ENCODE measurements at regions of chr2 and their contacts with region 1.

Region 1: GRCh38 chr2:106104332-106105062 is 89.6 kb downstream of the UXS1 start:
- DNase-seq: no peak
- H3K4me3 ChIP-seq: no peak overlapping the region
- H3K27ac ChIP-seq: no peak overlapping the region
- H3K4me1 ChIP-seq: peaks cover 0 to 13% (median 6%) of the 10 kb centered on the region in 3 donors
- H3K27me3 ChIP-seq: no peaks in the 10 kb centered on the region
- CTCF ChIP-seq: peak; percentile 91 to 97 (median 94)
- POLR2A ChIP-seq: no peak

Region 2: GRCh38 chr2:105969555-105969954 is 134.9 kb before region 1 on chr2:
- intact Hi-C with region 1: no loop called
- DNase-seq: no peak
- H3K4me3 ChIP-seq: no peak overlapping the region
- H3K27ac ChIP-seq: no peak overlapping the region
- H3K4me1 ChIP-seq: no peaks in the 10 kb centered on the region
- H3K27me3 ChIP-seq: no peaks in the 10 kb centered on the region
- CTCF ChIP-seq: peak in 2 of 6 experiments; percentile 32 to 54
- POLR2A ChIP-seq: no peak

Region 3: GRCh38 chr2:106193977-106194778 is 89.7 kb after region 1 on chr2 and contains the start of gene UXS1:
- intact Hi-C with region 1: no loop called
- DNase-seq: peak; percentile 78
- H3K4me3 ChIP-seq: peak within 1 kb of the TSS; percentile 69 to 99 (median 93)
- H3K27ac ChIP-seq: peak within 1 kb of the TSS; percentile 85 to 94 (median 91)
- H3K4me1 ChIP-seq: peaks cover 0 to 57% (median 15%) of the 10 kb centered on the region in 3 donors
- H3K27me3 ChIP-seq: peaks cover 0 to 7% (median 0%) of the 10 kb centered on the region in 4 donors
- CTCF ChIP-seq: no peak
- POLR2A ChIP-seq: peak in 2 of 4 donors; percentile 34 to 70
- total RNA-seq, gene UXS1: 23.5 to 40.4 (median 33.1) TPM

Region 4: GRCh38 chr2:106542811-106543259 is 438.3 kb after region 1 on chr2:
- intact Hi-C with region 1: loop called (anchors 10 kb)
- DNase-seq: no peak
- H3K4me3 ChIP-seq: peak overlapping the region in 3 of 4 donors; percentile 16 to 47 (median 18)
- H3K27ac ChIP-seq: no peak overlapping the region
- H3K4me1 ChIP-seq: peaks cover 0 to 6% (median 3%) of the 10 kb centered on the region in 3 donors
- H3K27me3 ChIP-seq: peaks cover 0 to 19% (median 0%) of the 10 kb centered on the region in 4 donors
- CTCF ChIP-seq: peak; percentile 71 to 94 (median 88)
- POLR2A ChIP-seq: no peak

Region 5: GRCh38 chr2:106582148-106583143 is 477.9 kb after region 1 on chr2:
- intact Hi-C with region 1: loop called (anchors 10 kb)
- DNase-seq: no peak
- H3K4me3 ChIP-seq: peak overlapping the region in 2 of 4 donors; percentile 32 to 57
- H3K27ac ChIP-seq: no peak overlapping the region
- H3K4me1 ChIP-seq: peaks cover 0 to 19% (median 3%) of the 10 kb centered on the region in 3 donors
- H3K27me3 ChIP-seq: peaks cover 0 to 54% (median 0%) of the 10 kb centered on the region in 4 donors
- CTCF ChIP-seq: peak; percentile 46 to 85 (median 78)
- POLR2A ChIP-seq: no peak

Measured in esophagus squamous epithelium (tissue), 5 donors.